Activated B cell treated with CpG ODN at 0.5 μM for 24 hours (primary cell): ENCODE measurements at regions of chr14 and their contacts with region 1.

Region 1: GRCh38 chr14:102694530-102695166 is 82.6 kb upstream of the TRAF3 start:
- DNase-seq: no peak
- ATAC-seq: peak; percentile 77
- H3K4me3 Mint-ChIP-seq: no peak overlapping the region
- H3K27ac Mint-ChIP-seq: no peak overlapping the region
- H3K4me1 Mint-ChIP-seq: peaks cover 41% of the 10 kb centered on the region
- H3K27me3 Mint-ChIP-seq: no peaks in the 10 kb centered on the region
- CTCF ChIP-seq: no peak

Region 2: GRCh38 chr14:102684298-102684663 is 10.4 kb before region 1 on chr14:
- CTCF ChIA-PET with region 1: interaction called, 11 read pairs
- POLR2A ChIA-PET with region 1: no interaction called
- intact Hi-C with region 1: no loop called
- DNase-seq: no peak
- ATAC-seq: no peak
- H3K4me3 Mint-ChIP-seq: no peak overlapping the region
- H3K27ac Mint-ChIP-seq: no peak overlapping the region
- H3K4me1 Mint-ChIP-seq: peaks cover 29% of the 10 kb centered on the region
- H3K27me3 Mint-ChIP-seq: no peaks in the 10 kb centered on the region
- CTCF ChIP-seq: no peak

Region 3: DNA sequence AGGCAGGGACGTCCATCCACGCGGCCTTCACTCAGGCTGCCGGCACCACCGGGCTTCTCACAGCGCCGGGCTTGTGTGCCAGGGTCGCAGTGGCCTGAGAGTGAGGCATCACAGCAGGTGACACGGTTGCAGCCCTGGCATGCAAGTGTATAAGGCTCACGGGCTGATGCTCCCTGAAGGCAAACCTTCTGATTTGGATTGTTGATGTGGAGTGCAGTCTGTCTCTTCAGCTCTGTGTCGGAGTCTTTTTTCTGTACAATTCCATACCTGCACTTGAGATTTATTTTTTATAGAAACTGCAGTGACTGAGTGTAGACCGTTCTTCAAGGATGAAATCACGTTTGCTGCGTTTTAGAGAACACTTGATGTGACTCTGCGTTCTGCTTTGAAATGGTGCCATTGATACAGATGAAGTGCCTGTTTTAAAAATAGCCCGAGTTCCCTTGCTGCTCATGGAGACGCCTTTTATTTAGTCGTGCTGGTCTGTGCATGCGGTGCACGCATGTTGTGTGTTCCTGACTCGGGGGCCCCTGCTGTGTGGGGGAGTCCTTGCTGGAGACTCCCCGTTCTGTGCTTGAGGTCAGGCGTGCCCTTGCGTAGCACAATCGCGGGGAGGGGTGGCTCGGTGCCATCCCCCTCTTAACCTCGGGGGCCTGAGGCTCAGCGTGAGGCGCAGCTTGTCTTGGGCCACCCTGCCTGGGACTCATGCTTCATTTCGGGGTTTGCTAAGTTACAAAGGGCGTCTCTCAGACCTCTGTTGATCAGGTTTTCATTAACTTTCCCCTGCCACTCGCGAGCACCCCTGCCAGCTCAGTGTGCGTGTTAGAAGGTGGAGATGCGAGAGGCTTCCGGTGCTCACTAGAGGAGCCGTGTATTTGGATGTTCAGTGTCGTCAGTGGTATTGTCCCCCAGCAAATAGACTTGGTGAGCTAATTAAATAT is 206.3 kb after region 1 on chr14:
- CTCF ChIA-PET with region 1: interaction called, 13 read pairs
- POLR2A ChIA-PET with region 1: interaction called, 6 read pairs
- intact Hi-C with region 1: no loop called
- DNase-seq: no peak
- ATAC-seq: peak; percentile 47
- H3K4me3 Mint-ChIP-seq: peak overlapping the region; percentile 75
- H3K27ac Mint-ChIP-seq: peak overlapping the region; percentile 94
- H3K4me1 Mint-ChIP-seq: peaks cover 70% of the 10 kb centered on the region
- H3K27me3 Mint-ChIP-seq: no peaks in the 10 kb centered on the region
- CTCF ChIP-seq: no peak

Region 4: DNA sequence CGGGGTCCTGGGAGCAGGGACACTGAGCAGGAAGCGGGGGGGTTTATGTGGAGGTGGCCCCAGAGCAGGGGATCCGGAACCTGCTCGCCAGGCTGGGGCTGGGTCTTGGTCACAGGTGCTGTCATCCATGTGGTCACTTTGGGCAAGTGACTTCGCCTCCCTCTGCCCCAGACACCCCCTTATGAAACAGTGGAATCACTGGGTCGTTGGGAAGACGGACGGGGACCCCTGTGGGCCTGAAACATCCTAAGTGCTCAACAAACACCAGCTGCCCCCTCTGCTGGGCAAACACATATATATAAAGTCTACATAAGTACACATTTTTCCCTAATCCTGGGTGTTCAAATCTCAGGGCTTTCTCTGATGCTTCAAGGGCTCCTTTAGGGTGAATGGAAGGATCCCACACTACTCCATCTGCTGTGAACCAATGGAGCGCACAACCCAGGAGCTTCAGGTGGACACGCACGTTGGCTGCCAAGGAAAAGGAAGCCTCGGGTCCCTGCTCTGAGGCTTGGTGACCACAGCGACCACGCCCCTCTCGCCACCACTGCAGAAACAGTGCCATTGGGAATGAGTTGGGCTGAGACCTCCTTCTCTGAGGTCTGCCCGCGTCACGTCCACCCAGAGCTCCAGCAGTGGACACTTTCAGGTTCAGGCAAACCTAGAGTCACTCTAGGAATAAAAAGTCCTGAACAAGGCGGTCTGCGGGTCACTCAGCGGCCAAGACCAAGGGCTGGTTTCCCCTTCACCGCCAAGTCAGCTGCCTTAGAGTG is 308.1 kb after region 1 on chr14:
- CTCF ChIA-PET with region 1: interaction called, 7 read pairs
- POLR2A ChIA-PET with region 1: no interaction called
- intact Hi-C with region 1: loop called (anchors 1 kb)
- DNase-seq: no peak
- ATAC-seq: no peak
- H3K4me3 Mint-ChIP-seq: no peak overlapping the region
- H3K27ac Mint-ChIP-seq: peak overlapping the region; percentile 51
- H3K4me1 Mint-ChIP-seq: peaks cover 13% of the 10 kb centered on the region
- H3K27me3 Mint-ChIP-seq: no peaks in the 10 kb centered on the region
- CTCF ChIP-seq: no peak

Region 5: GRCh38 chr14:103104654-103105452 is 410.2 kb after region 1 on chr14:
- CTCF ChIA-PET with region 1: interaction called, 28 read pairs
- POLR2A ChIA-PET with region 1: no interaction called
- intact Hi-C with region 1: no loop called
- DNase-seq: peak; percentile 75
- ATAC-seq: peak; percentile 72
- H3K4me3 Mint-ChIP-seq: peak overlapping the region; percentile 11
- H3K27ac Mint-ChIP-seq: peak overlapping the region; percentile 18
- H3K4me1 Mint-ChIP-seq: peaks cover 40% of the 10 kb centered on the region
- H3K27me3 Mint-ChIP-seq: peaks cover 17% of the 10 kb centered on the region
- CTCF ChIP-seq: peak; percentile 50

Region 6: GRCh38 chr14:103520657-103521437 is 826.2 kb after region 1 on chr14:
- CTCF ChIA-PET with region 1: no interaction called
- POLR2A ChIA-PET with region 1: no interaction called
- intact Hi-C with region 1: no loop called
- DNase-seq: peak; percentile 75
- ATAC-seq: peak; percentile 78
- H3K4me3 Mint-ChIP-seq: peak overlapping the region; percentile 70
- H3K27ac Mint-ChIP-seq: no peak overlapping the region
- H3K4me1 Mint-ChIP-seq: peaks cover 23% of the 10 kb centered on the region
- H3K27me3 Mint-ChIP-seq: no peaks in the 10 kb centered on the region
- CTCF ChIP-seq: no peak